Activated T-helper 2 cell treated with anti-CD3 and anti-CD28 coated beads, Interferon-gamma antibody, Interleukin-2, Interleukin-4, amounts not matched to agents 10 μg/mL and 5 μg/mL and 100 μg/mL, durations not matched to agents 14 hours and 24 hours and 36 hours (primary cell): ENCODE measurements at regions of chr11 and their contacts with region 1.

Region 1: GRCh38 chr11:82229341-82229740 is 504.3 kb downstream of the FAM181B start:
- DNase-seq: no peak
- H3K4me3 Mint-ChIP-seq: no peak overlapping the region
- H3K27ac Mint-ChIP-seq: no peak overlapping the region
- H3K4me1 Mint-ChIP-seq: no peaks in the 10 kb centered on the region
- H3K27me3 Mint-ChIP-seq: no peaks in the 10 kb centered on the region

Region 2: DNA sequence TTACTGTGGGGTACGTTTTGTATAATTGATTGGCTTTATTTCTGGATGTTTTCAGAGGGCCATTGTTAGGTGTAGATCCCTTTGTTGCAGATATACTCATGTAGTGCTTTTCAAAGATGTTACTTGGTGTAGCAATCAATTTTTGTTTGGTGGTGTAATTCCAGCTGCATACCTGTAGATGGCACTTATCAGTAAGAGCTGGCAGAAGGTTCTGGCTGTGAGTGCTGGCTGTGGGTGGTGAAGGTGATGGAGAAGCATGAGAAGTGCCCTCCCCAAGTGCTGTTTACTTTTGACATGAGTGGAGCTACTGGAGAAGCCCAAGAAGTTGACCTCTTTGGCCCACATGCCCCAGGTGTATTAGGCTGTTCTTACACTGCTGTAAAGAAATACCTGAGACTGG is 570.6 kb before region 1 on chr11:
- intact Hi-C with region 1: loop called (anchors 1 kb)
- DNase-seq: no peak
- H3K4me3 Mint-ChIP-seq: no peak overlapping the region
- H3K27ac Mint-ChIP-seq: no peak overlapping the region
- H3K4me1 Mint-ChIP-seq: no peaks in the 10 kb centered on the region
- H3K27me3 Mint-ChIP-seq: peaks cover 4% of the 10 kb centered on the region

Region 3: GRCh38 chr11:81787584-81788049 is 441.7 kb before region 1 on chr11:
- intact Hi-C with region 1: loop called (anchors 1 kb)
- DNase-seq: no peak
- H3K4me3 Mint-ChIP-seq: no peak overlapping the region
- H3K27ac Mint-ChIP-seq: peak overlapping the region; percentile 70
- H3K4me1 Mint-ChIP-seq: peaks cover 16% of the 10 kb centered on the region
- H3K27me3 Mint-ChIP-seq: peaks cover 3% of the 10 kb centered on the region